Heart right ventricle (tissue), 16 donors: ENCODE measurements at regions of chr11 and their contacts with region 1.

Region 1: DNA sequence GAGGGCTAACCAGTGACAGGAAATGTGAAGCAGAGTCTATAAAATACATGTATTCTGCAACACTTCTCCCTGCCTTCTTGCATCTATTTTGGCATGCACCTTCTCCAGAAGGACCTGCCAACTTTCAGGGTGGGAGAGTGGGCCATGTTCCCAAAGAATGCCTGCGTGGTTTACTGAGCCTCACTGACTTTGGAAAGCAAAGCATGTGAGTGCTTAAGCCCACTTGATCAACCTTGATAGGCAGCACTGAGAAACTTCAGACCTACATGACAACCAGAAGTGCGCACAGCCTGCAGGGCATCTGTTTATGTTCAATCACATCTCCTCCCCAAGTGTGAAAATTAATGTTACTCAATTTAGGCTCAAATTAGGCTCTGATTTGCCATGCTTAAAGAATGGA is 69.2 kb downstream of the AMOTL1 start:
- DNase-seq: peak; percentile 20 to 38
- ATAC-seq: peak; percentile 68 to 98 (median 86)
- H3K4me3 ChIP-seq: no peak overlapping the region
- H3K27ac ChIP-seq: no peak overlapping the region
- H3K4me1 ChIP-seq: peaks cover 0 to 53% (median 17%) of the 10 kb centered on the region in 9 donors
- H3K27me3 ChIP-seq: peaks cover 0 to 4% (median 0%) of the 10 kb centered on the region in 7 donors
- CTCF ChIP-seq: no peak

Region 2: GRCh38 chr11:94794287-94795168 is 42.8 kb before region 1 on chr11:
- intact Hi-C with region 1: no loop called
- DNase-seq: peak; percentile 53 to 69
- ATAC-seq: peak; percentile 81 to 96 (median 86)
- H3K4me3 ChIP-seq: peak overlapping the region in 2 of 10 donors; percentile 3 to 19
- H3K27ac ChIP-seq: peak overlapping the region; percentile 1 to 75 (median 64)
- H3K4me1 ChIP-seq: peaks cover 9 to 79% (median 45%) of the 10 kb centered on the region in 9 donors
- H3K27me3 ChIP-seq: no peaks in the 10 kb centered on the region
- CTCF ChIP-seq: no peak

Region 3: DNA sequence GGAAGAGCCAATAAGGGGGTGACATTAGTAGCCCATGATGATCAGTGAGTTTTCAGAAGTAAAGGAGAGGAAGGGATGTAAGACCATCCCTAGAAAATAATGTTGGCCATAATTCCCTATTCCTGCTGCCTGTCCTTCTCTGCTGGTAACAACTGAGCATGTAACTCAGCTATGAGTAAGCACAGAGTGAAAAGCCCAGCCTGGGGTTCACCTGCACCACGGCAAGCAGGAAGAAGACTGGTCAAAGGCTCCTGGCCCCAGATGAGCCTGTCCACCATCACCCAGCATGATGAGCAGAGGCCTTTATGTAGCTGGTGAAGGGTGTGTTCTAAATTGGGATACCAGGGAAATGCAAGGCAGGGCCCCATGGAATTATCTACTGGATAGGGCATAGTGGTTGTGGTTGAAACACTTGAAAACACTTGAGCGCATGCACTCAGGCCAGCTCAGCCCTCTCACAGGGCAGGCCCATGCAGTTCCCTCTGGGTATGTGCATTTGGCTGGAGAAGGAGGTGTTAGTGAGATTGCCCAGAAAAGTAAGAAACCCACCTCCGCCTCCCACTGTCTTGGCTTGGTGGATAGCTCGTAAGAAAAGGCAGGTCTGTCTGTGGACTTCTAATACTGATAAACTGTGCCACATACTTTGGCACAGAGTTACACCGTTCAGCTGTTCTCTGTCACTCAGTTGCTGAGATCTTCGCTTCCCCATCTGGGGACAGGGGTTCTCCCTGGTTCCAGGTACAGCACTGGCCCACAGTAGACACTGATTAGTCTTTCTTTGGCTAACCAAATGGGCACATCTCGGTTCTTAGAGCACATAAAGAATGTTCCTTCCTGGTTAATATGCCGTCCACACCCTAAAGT is 17.7 kb after region 1 on chr11:
- intact Hi-C with region 1: loop called in 1 of 10 experiments (anchors 1 kb)
- DNase-seq: peak; percentile 49 to 68
- ATAC-seq: peak; percentile 89 to 98 (median 96)
- H3K4me3 ChIP-seq: no peak overlapping the region
- H3K27ac ChIP-seq: peak overlapping the region in 2 of 10 donors; percentile 29 to 38
- H3K4me1 ChIP-seq: peaks cover 0 to 36% (median 12%) of the 10 kb centered on the region in 9 donors
- H3K27me3 ChIP-seq: no peaks in the 10 kb centered on the region
- CTCF ChIP-seq: no peak